ENCODE measurements at regions of chr1 and their contacts with region 1.

Region 1: DNA sequence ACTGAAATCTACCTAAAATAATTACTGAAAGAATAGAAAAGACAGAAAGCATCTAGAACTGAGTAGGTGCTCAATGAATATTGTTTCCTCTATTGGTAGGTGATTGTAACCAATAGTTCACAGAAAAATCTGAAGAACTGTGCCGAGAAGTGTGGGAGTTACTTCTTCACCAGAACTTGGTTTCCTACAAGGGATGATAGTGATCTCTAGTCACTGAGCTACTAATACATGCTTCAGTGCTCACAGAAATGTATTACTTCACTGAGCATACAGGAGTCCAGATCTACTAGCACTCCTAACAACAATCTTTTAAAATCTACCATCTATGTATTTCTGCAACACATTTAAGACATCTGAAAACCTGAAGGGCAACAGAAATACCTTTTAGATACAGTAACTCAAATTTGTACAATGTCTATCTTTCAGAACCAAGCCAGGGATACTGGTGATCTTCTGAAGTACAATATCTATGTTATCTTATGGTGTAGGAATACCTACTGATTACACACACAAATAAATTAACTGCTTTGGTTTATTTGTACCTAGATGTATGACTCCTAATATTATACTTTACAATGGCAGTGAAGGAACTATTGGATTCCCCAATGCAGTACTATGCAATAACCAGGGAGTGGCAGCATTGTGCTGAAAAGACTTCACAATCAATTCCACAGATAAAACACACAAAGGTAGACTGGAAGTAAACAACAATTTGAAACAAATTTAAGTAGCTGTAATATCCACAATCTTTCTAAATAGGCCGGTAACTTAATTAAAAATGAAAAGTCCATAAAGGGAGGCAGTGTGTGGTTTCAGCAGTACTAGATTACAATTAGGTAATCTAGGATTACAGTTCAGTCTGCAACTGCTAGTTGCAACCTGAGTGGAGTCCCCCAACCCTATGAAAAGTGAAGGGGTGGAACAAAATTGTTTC is 243.0 kb downstream of the SLC45A1 start:
- DNase-seq: peak; percentile 34
- ATAC-seq: peak; percentile 80
- H3K4me3 Mint-ChIP-seq: no peak overlapping the region
- H3K27ac Mint-ChIP-seq: peak overlapping the region; percentile 56
- H3K4me1 Mint-ChIP-seq: peaks cover 49% of the 10 kb centered on the region
- H3K27me3 Mint-ChIP-seq: no peaks in the 10 kb centered on the region

Region 2: GRCh38 chr1:8348777-8349491 is 211.9 kb before region 1 on chr1:
- CTCF ChIA-PET with region 1: no interaction called
- POLR2A ChIA-PET with region 1: no interaction called
- intact Hi-C with region 1: no loop called
- DNase-seq: peak; percentile 83
- ATAC-seq: peak; percentile 83
- H3K4me3 Mint-ChIP-seq: no peak overlapping the region
- H3K27ac Mint-ChIP-seq: no peak overlapping the region
- H3K4me1 Mint-ChIP-seq: peaks cover 3% of the 10 kb centered on the region
- H3K27me3 Mint-ChIP-seq: peaks cover 2% of the 10 kb centered on the region

Region 3: DNA sequence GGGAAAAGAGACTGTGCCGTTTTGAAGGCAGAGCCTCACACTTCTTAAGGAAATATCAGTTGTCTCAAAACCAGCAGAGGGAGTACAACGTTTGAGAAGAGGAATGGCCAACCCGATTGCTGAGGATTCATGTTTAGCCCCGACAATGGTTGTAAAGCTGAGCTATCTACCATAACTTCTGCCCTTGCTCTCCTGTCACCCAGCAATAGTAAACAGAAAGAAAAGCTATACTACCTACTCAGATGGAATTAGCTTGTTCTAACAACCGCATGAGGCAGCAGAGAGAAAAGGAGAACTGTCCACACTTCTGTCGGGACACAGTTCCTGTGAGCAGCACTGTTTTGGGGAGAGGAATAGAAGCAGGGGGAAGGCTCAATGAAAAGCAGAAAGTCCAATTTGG is 151.8 kb before region 1 on chr1:
- CTCF ChIA-PET with region 1: no interaction called
- POLR2A ChIA-PET with region 1: no interaction called
- intact Hi-C with region 1: no loop called
- DNase-seq: peak; percentile 23
- ATAC-seq: peak; percentile 69
- H3K4me3 Mint-ChIP-seq: peak overlapping the region; percentile 33
- H3K27ac Mint-ChIP-seq: peak overlapping the region; percentile 77
- H3K4me1 Mint-ChIP-seq: peaks cover 61% of the 10 kb centered on the region
- H3K27me3 Mint-ChIP-seq: no peaks in the 10 kb centered on the region

Region 4: DNA sequence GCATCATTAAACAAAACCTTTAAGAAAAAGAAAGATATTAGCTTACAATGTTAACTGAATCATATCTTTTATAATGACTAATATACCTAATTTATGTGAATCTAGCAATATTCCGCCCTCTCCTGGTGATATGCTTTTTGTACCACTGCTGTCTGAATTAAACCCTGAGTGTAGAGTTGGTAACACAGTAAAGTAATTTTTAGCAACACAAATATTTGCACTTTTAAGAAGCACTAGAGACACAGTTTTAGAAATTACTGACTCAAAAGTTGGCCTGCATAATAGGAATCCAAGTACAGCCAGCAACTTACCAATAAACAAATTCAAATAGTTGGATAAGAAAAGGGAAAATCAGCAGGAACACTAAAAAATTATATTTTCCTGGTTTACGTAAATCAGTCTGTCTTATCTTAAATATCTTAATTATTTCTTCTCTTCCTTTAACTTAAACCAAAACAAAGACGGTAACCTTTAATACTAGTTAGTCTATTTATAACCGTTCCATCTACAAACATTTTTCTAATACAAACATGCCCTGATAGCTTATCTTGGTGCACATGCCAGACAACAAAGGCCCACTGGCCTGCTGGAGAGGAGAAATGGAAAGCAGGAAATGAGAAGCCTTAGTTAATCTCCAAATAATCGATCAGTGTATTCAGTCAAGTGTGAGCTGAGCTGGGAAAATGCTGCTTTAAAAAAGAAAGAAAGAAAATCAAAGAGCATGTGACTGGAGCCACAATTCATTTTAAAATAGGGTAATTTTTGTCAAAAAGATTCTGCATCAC is 10.5 kb after region 1 on chr1:
- CTCF ChIA-PET with region 1: interaction called, 15 read pairs
- POLR2A ChIA-PET with region 1: no interaction called
- intact Hi-C with region 1: no loop called
- DNase-seq: no peak
- ATAC-seq: no peak
- H3K4me3 Mint-ChIP-seq: no peak overlapping the region
- H3K27ac Mint-ChIP-seq: no peak overlapping the region
- H3K4me1 Mint-ChIP-seq: peaks cover 6% of the 10 kb centered on the region
- H3K27me3 Mint-ChIP-seq: no peaks in the 10 kb centered on the region

Region 5: GRCh38 chr1:8718850-8719361 is 158.0 kb after region 1 on chr1:
- CTCF ChIA-PET with region 1: interaction called, 18 read pairs
- POLR2A ChIA-PET with region 1: no interaction called
- intact Hi-C with region 1: no loop called
- DNase-seq: no peak
- ATAC-seq: no peak
- H3K4me3 Mint-ChIP-seq: no peak overlapping the region
- H3K27ac Mint-ChIP-seq: no peak overlapping the region
- H3K4me1 Mint-ChIP-seq: peaks cover 22% of the 10 kb centered on the region
- H3K27me3 Mint-ChIP-seq: no peaks in the 10 kb centered on the region

Region 6: GRCh38 chr1:8727809-8728213 is 166.9 kb after region 1 on chr1:
- CTCF ChIA-PET with region 1: interaction called, 45 read pairs
- POLR2A ChIA-PET with region 1: interaction called, 3 read pairs
- intact Hi-C with region 1: loop called (anchors 1 kb)
- DNase-seq: no peak
- ATAC-seq: no peak
- H3K4me3 Mint-ChIP-seq: no peak overlapping the region
- H3K27ac Mint-ChIP-seq: no peak overlapping the region
- H3K4me1 Mint-ChIP-seq: peaks cover 16% of the 10 kb centered on the region
- H3K27me3 Mint-ChIP-seq: no peaks in the 10 kb centered on the region

Region 7: GRCh38 chr1:9037476-9038337 is 476.8 kb after region 1 on chr1:
- CTCF ChIA-PET with region 1: no interaction called
- POLR2A ChIA-PET with region 1: no interaction called
- intact Hi-C with region 1: no loop called
- DNase-seq: no peak
- ATAC-seq: no peak
- H3K4me3 Mint-ChIP-seq: no peak overlapping the region
- H3K27ac Mint-ChIP-seq: no peak overlapping the region
- H3K4me1 Mint-ChIP-seq: no peaks in the 10 kb centered on the region
- H3K27me3 Mint-ChIP-seq: no peaks in the 10 kb centered on the region

Measured in activated CD4-positive, alpha-beta T cell treated with anti-CD3 and anti-CD28 coated beads for 36 hours (primary cell).